ENCODE measurements at regions of chr1 and their contacts with region 1.

Region 1: GRCh38 chr1:116498789-116499628 is 71.8 kb downstream of the CD58 start:
- DNase-seq: peak in 8 of 9 experiments; percentile 20 to 78 (median 52)
- ATAC-seq: peak; percentile 70
- H3K4me3 ChIP-seq: no peak overlapping the region
- H3K4me3 Mint-ChIP-seq: no peak overlapping the region
- H3K27ac ChIP-seq: no peak overlapping the region
- H3K27ac Mint-ChIP-seq: peak overlapping the region; percentile 57
- H3K4me1 ChIP-seq: peaks cover 11% of the 10 kb centered on the region
- H3K4me1 Mint-ChIP-seq: peaks cover 23% of the 10 kb centered on the region
- H3K27me3 ChIP-seq: no peaks in the 10 kb centered on the region
- H3K27me3 Mint-ChIP-seq: no peaks in the 10 kb centered on the region
- CTCF ChIP-seq: peak; percentile 77

Region 2: DNA sequence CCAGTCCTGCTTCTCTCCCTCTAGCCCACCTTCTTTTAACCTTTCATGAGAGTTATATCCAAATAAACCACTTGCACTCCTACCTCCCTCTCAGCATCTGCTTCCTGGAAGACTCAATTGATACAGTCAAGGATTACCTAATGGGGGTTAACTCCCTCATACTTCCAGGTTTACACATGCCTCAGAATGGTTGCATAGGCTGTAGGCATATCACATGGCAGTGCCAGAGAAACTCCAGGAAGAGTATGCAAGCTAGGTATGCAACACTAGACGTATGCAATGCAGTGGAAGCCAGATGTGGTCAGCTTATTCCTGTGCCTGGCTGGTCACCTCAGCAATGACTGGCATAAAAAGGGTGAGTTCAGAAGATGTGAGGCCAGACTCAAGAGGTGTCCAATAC is 890.0 kb before region 1 on chr1:
- CTCF ChIA-PET with region 1: no interaction called
- POLR2A ChIA-PET with region 1: no interaction called
- intact Hi-C with region 1: loop called in 1 of 2 experiments (anchors 5 kb)
- DNase-seq: no peak
- ATAC-seq: no peak
- H3K4me3 ChIP-seq: no peak overlapping the region
- H3K4me3 Mint-ChIP-seq: no peak overlapping the region
- H3K27ac ChIP-seq: no peak overlapping the region
- H3K27ac Mint-ChIP-seq: no peak overlapping the region
- H3K4me1 ChIP-seq: no peaks in the 10 kb centered on the region
- H3K4me1 Mint-ChIP-seq: no peaks in the 10 kb centered on the region
- H3K27me3 ChIP-seq: peaks cover 0 to 2% of the 10 kb centered on the region in 2 experiments
- H3K27me3 Mint-ChIP-seq: no peaks in the 10 kb centered on the region
- CTCF ChIP-seq: no peak

Region 3: GRCh38 chr1:115717541-115717940 is 781.5 kb before region 1 on chr1:
- CTCF ChIA-PET with region 1: interaction called, 3 read pairs
- POLR2A ChIA-PET with region 1: no interaction called
- intact Hi-C with region 1: loop called in 1 of 2 experiments (anchors 2 kb)
- DNase-seq: peak in 4 of 9 experiments; percentile 15 to 41 (median 24)
- ATAC-seq: no peak
- H3K4me3 ChIP-seq: no peak overlapping the region
- H3K4me3 Mint-ChIP-seq: no peak overlapping the region
- H3K27ac ChIP-seq: no peak overlapping the region
- H3K27ac Mint-ChIP-seq: no peak overlapping the region
- H3K4me1 ChIP-seq: no peaks in the 10 kb centered on the region
- H3K4me1 Mint-ChIP-seq: no peaks in the 10 kb centered on the region
- H3K27me3 ChIP-seq: no peaks in the 10 kb centered on the region
- H3K27me3 Mint-ChIP-seq: peaks cover 4% of the 10 kb centered on the region
- CTCF ChIP-seq: no peak

Region 4: DNA sequence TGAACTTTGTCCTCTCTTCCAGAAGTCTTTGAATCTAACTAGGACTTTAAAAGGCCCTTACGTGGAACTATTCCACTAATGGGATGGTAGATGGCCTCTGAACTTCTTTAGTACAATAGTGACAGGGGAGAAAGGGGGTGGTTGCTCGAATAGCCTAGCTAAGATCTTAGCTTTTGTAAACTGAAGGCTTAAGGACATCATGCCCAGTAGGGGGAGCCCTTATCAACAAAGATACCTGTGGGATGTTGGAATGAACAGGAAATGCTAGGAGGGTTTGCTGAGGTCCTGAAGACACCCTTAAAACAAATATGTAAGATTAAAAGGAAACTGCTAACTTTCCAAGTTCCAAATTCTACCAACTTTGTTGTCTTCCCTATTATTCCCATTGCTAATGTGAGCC is 691.3 kb before region 1 on chr1:
- CTCF ChIA-PET with region 1: no interaction called
- POLR2A ChIA-PET with region 1: no interaction called
- intact Hi-C with region 1: loop called (anchors 2 to 5 kb)
- DNase-seq: peak in 6 of 9 experiments; percentile 24 to 69 (median 36)
- ATAC-seq: no peak
- H3K4me3 ChIP-seq: no peak overlapping the region
- H3K4me3 Mint-ChIP-seq: no peak overlapping the region
- H3K27ac ChIP-seq: no peak overlapping the region
- H3K27ac Mint-ChIP-seq: no peak overlapping the region
- H3K4me1 ChIP-seq: no peaks in the 10 kb centered on the region
- H3K4me1 Mint-ChIP-seq: peaks cover 2% of the 10 kb centered on the region
- H3K27me3 ChIP-seq: no peaks in the 10 kb centered on the region
- H3K27me3 Mint-ChIP-seq: peaks cover 6% of the 10 kb centered on the region
- CTCF ChIP-seq: peak; percentile 42

Region 5: GRCh38 chr1:116453906-116454305 is 45.1 kb before region 1 on chr1:
- CTCF ChIA-PET with region 1: no interaction called
- POLR2A ChIA-PET with region 1: no interaction called
- intact Hi-C with region 1: loop called in 1 of 2 experiments (anchors 2 kb)
- DNase-seq: no peak
- ATAC-seq: no peak
- H3K4me3 ChIP-seq: no peak overlapping the region
- H3K4me3 Mint-ChIP-seq: no peak overlapping the region
- H3K27ac ChIP-seq: no peak overlapping the region
- H3K27ac Mint-ChIP-seq: no peak overlapping the region
- H3K4me1 ChIP-seq: no peaks in the 10 kb centered on the region
- H3K4me1 Mint-ChIP-seq: no peaks in the 10 kb centered on the region
- H3K27me3 ChIP-seq: no peaks in the 10 kb centered on the region
- H3K27me3 Mint-ChIP-seq: no peaks in the 10 kb centered on the region
- CTCF ChIP-seq: no peak

Measured in CD8-positive, alpha-beta T cell (primary cell).